ENCODE measurements at regions of chr10 and their contacts with region 1.

Region 1: DNA sequence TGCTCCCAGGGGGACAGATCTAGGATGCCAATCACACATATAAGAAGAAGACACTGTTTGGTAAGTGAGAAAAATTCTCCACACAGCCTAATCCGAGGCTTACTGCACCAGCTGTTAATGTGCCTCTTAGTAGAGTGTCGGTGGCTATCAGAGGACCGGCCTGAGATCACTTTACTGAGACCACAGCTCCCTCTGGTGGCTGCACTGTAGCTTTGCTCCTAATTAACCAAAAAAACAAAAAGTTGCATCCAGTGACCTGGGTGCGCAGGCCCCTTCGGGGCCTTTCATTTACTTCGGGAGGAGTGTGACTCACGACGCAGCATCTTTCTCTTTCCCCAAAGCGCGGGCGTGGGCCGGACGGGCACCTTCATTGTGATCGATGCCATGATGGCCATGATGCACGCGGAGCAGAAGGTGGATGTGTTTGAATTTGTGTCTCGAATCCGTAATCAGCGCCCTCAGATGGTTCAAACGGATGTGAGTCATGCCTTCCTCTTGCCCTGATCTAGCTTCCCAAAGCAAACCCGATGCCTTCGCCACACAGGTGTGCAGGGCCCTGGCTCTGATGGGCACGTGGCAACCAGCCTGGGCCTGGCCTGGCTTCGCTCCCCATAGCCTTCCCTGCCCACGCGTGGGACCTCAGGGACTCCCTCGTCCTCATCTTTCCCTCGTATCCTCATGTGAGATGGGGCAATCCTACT is 56.7 kb downstream of the MKI67 start:
- DNase-seq: peak; percentile 54 to 70 (median 64)
- ATAC-seq: peak; percentile 93
- H3K4me3 ChIP-seq: no peak overlapping the region
- H3K27ac ChIP-seq: no peak overlapping the region
- H3K4me1 ChIP-seq: peaks cover 0 to 5% of the 10 kb centered on the region in 2 experiments; a peak in 2 of 5 replicates
- H3K27me3 ChIP-seq: peaks cover 3 to 30% of the 10 kb centered on the region in 2 experiments; a peak in 4 of 5 replicates
- CTCF ChIP-seq: peak; percentile 57 to 81 (median 71)
- EP300 ChIP-seq: no peak
- POLR2A ChIP-seq: no peak
- RAD21 ChIP-seq: peak; percentile 71 to 83

Region 2: DNA sequence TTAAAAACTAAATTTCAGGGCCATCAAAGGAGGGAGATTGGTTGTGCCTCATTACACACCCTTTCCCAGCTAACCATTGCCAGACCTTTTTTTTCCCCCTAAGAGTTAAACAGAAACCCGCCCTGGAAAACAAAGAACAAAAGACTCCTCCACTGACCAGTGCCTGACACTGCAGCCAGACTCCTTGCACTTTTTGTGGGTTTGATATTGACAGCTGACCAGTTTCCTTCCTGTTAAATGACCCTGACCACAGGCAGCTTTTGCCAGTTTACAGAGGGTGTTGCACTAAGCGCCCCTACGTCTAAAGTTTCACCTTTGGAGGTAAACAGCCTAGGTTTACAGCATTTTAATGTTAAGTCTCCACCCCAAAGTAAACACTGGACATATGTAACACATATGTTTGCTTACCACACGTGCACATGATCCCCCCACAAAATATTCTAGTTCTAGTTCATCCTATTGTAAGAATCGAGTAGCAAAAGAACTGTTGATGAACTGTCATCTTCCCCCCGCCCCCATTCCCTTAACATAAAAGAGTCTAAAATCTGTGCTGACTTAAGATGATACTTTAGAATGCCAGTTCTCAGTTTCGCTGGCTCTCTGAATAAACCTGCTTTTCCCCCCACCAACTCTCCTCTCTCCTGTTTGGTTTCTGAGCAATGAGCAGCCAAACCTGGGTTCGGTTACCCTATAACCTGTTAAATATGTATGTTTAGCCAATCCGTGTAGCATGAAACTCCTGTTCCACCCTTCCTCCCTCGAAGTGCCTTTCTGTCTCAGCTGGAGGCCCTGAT is 294.5 kb before region 1 on chr10:
- CTCF ChIA-PET with region 1: no interaction called
- POLR2A ChIA-PET with region 1: no interaction called
- in situ Hi-C with region 1: no loop called
- intact Hi-C with region 1: no loop called
- DNase-seq: no peak
- ATAC-seq: no peak
- H3K4me3 ChIP-seq: no peak overlapping the region
- H3K27ac ChIP-seq: no peak overlapping the region
- H3K4me1 ChIP-seq: no peaks in the 10 kb centered on the region
- H3K27me3 ChIP-seq: no peaks in the 10 kb centered on the region
- CTCF ChIP-seq: no peak
- EP300 ChIP-seq: no peak
- POLR2A ChIP-seq: no peak
- RAD21 ChIP-seq: no peak

Region 3: GRCh38 chr10:128035557-128035973 is 33.9 kb before region 1 on chr10:
- CTCF ChIA-PET with region 1: interaction called, 10 read pairs
- POLR2A ChIA-PET with region 1: no interaction called
- in situ Hi-C with region 1: no loop called
- intact Hi-C with region 1: loop called (anchors 1 kb)
- DNase-seq: peak; percentile 23 to 64 (median 50)
- ATAC-seq: peak; percentile 90
- H3K4me3 ChIP-seq: no peak overlapping the region
- H3K27ac ChIP-seq: no peak overlapping the region
- H3K4me1 ChIP-seq: no peaks in the 10 kb centered on the region
- H3K27me3 ChIP-seq: peaks cover 0 to 12% of the 10 kb centered on the region in 2 experiments; a peak in 2 of 5 replicates
- CTCF ChIP-seq: peak; percentile 55 to 61 (median 60)
- EP300 ChIP-seq: no peak
- POLR2A ChIP-seq: no peak
- RAD21 ChIP-seq: peak; percentile 50 to 63